Ascending aorta (tissue), 2 donors: ENCODE measurements at regions of chr11 and their contacts with region 1.

Region 1: DNA sequence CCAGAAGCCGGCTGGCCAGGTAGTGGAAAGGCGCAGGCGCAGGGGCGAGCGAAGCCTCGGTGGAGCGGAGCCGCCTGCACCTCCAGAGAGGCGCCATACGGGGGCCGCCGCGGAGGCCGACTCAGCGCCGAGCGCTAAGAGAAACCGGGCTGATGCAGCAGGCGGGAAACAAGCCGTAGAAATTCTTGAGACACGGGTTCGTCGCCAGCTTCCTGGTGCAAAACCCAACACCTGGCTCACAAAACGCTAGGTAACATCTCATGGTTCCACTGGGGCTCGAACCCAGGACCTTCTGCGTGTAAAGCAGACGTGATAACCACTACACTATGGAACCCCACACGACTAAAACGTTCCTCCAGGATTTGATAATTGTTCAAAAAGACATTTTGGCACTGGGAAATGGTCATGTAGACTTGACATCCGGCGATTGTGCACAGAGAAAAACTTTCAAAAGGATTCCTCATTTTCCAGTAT is 39.1 kb downstream of the OR4D9 start:
- DNase-seq: peak in 1 of 2 donors; percentile 90
- H3K4me3 ChIP-seq: peak overlapping the region; percentile 50 to 71
- H3K27ac ChIP-seq: peak overlapping the region; percentile 84 to 89
- H3K4me1 ChIP-seq: peaks cover 0 to 4% of the 10 kb centered on the region in 2 donors
- H3K27me3 ChIP-seq: no peaks in the 10 kb centered on the region
- CTCF ChIP-seq: peak; percentile 53 to 75 (median 66)

Region 2: DNA sequence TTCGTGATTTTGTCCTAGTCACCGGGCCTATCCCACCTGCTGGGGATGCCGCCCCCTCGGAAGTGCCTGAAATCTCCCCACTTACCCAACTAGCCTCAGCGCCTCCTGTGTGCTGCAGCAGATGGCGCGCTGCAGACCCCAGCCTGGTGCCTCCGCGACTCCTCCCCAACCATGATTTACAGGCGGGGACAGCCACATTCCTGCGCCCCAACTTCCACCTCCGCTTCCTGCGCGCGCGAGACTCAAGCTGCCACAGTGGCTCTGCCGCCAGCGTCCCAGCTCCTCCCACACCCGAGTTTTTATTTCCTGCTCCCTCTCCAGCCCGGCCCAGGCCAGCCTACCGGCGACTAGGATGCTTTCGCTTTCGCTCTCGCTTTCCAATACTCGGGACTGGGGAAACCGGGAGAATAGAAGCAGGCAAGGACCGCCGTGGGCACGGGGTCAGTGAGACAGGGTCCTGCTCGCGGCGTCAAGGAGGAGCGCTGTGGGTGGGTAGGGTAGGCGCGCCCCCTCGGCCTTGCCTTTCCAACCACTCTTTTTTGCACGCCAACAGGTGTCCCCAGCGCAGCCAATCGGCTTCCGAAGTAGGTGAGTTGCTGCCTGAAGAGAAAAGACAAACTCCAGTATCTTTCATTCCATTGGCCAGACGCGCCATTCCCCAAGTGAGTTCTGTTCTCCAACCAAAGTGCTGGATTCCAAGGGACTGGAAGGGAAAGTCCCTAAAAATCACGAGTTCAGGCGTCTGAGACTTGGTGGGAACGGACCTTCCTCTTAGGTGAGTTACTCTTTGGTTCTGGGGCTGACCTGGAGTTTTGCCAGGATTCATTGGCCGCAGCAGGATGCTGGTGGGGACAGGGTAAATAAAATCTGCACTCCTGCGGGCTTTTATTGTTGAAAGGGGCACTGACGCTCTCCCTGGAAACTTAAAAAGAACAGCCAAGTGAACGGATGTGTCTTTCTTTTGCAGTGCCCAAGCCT is 407.6 kb before region 1 on chr11 and contains the start of gene FAM111A:
- intact Hi-C with region 1: loop called (anchors 10 kb)
- DNase-seq: peak; percentile 70 to 93
- H3K4me3 ChIP-seq: peak within 1 kb of the TSS; percentile 79 to 90
- H3K27ac ChIP-seq: peak within 1 kb of the TSS; percentile 95 to 96
- H3K4me1 ChIP-seq: peaks cover 0 to 9% of the 10 kb centered on the region in 2 donors
- H3K27me3 ChIP-seq: no peaks in the 10 kb centered on the region
- CTCF ChIP-seq: peak in 1 of 3 experiments; percentile 18
- total RNA-seq, gene FAM111A: 54.3 TPM

Region 3: DNA sequence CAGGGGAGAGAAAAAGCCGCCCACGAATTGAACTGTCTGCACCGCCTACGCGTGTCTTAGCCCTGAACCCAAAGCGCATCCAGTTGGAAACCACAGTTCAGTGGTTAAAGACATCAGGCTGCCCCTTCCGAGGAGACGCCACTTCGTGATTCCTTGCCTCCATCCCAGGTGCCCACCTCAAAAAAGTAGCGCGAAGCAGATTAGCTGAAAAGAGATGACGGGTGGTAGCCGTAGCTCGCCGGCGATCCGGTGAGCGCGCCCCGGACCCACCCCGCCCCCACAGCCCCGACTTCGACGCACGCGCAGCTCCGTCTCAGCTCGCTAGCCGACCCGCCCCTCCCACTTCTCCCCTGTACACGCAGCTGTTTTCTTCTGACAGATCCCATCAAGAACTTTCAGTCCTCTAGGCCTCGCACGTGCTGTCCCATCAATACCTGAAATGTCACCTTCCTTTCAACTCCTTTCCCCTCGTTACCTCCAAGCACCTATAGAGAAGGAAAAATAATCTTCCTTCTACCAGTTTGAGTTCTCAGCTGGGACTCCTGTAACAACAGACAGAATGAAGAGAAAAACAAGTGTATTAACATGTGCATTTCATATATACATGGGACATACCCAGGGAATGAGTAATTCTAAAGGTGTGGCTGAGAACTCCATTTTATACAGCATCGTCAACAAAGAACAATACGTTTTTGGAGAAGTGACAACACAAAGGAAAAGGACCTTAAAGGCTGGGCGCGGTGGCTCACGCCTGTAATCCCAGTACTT is 10.5 kb after region 1 on chr11:
- intact Hi-C with region 1: loop called (anchors 1 kb)
- DNase-seq: peak; percentile 38 to 91
- H3K4me3 ChIP-seq: peak overlapping the region; percentile 83
- H3K27ac ChIP-seq: peak overlapping the region; percentile 74 to 89
- H3K4me1 ChIP-seq: peaks cover 0 to 8% of the 10 kb centered on the region in 2 donors
- H3K27me3 ChIP-seq: no peaks in the 10 kb centered on the region
- CTCF ChIP-seq: no peak

Region 4: GRCh38 chr11:61152816-61153592 is 1602.6 kb after region 1 on chr11:
- intact Hi-C with region 1: loop called (anchors 10 kb)
- DNase-seq: no peak
- H3K4me3 ChIP-seq: no peak overlapping the region
- H3K27ac ChIP-seq: peak overlapping the region; percentile 84 to 88
- H3K4me1 ChIP-seq: peaks cover 11 to 44% of the 10 kb centered on the region in 2 donors
- H3K27me3 ChIP-seq: no peaks in the 10 kb centered on the region
- CTCF ChIP-seq: no peak